ENCODE measurements at regions of chr1 and their contacts with region 1.

Region 1: GRCh38 chr1:241531195-241532161 is 700 bp upstream of the KMO start:
- H3K4me3 Mint-ChIP-seq: peak overlapping the region; percentile 90
- H3K27ac Mint-ChIP-seq: peak overlapping the region; percentile 99
- H3K4me1 Mint-ChIP-seq: peaks cover 37% of the 10 kb centered on the region
- H3K27me3 Mint-ChIP-seq: no peaks in the 10 kb centered on the region

Region 2: GRCh38 chr1:241551759-241552638 is 20.5 kb after region 1 on chr1:
- intact Hi-C with region 1: loop called (anchors 1 kb)
- H3K4me3 Mint-ChIP-seq: peak overlapping the region; percentile 79
- H3K27ac Mint-ChIP-seq: peak overlapping the region; percentile 99
- H3K4me1 Mint-ChIP-seq: peaks cover 51% of the 10 kb centered on the region
- H3K27me3 Mint-ChIP-seq: no peaks in the 10 kb centered on the region

Region 3: GRCh38 chr1:241611063-241611462 is 79.6 kb after region 1 on chr1:
- intact Hi-C with region 1: loop called (anchors 5 kb)
- H3K4me3 Mint-ChIP-seq: no peak overlapping the region
- H3K27ac Mint-ChIP-seq: no peak overlapping the region
- H3K4me1 Mint-ChIP-seq: peaks cover 33% of the 10 kb centered on the region
- H3K27me3 Mint-ChIP-seq: no peaks in the 10 kb centered on the region

Region 4: GRCh38 chr1:241627453-241628259 is 96.2 kb after region 1 on chr1:
- intact Hi-C with region 1: loop called (anchors 1 kb)
- H3K4me3 Mint-ChIP-seq: no peak overlapping the region
- H3K27ac Mint-ChIP-seq: peak overlapping the region; percentile 67
- H3K4me1 Mint-ChIP-seq: peaks cover 22% of the 10 kb centered on the region
- H3K27me3 Mint-ChIP-seq: no peaks in the 10 kb centered on the region

Region 5: GRCh38 chr1:241834733-241835377 is 303.4 kb after region 1 on chr1:
- intact Hi-C with region 1: loop called (anchors 2 kb)
- H3K4me3 Mint-ChIP-seq: no peak overlapping the region
- H3K27ac Mint-ChIP-seq: no peak overlapping the region
- H3K4me1 Mint-ChIP-seq: peaks cover 6% of the 10 kb centered on the region
- H3K27me3 Mint-ChIP-seq: no peaks in the 10 kb centered on the region

Measured in dendritic cell treated with granulocyte-macrophage colony-stimulating factor and Interleukin-4, amounts not matched to agents 40 ng/mL and 50 ng/mL, for 4 days (primary cell).